GM12878 (cell line): ENCODE measurements at regions of chr16 and their contacts with region 1.

Region 1: DNA sequence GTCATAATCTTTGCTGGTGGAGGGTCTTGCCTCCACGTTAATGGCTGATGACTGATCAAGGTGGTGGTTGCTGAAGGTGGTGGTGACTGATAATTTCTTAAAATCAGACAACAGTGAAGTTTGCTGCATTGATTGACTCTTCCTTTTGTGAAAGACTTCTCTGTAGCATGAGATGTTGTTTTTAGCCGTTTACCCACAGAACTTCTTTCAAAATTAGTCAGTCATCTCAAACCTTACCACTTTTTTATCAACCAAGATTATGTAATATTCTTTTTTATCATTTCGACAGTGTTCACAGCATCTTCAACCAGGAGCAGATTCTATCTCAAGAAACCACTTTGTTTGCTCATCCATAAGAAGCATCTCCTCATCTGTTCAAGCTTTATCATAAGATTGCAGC is 5.9 kb downstream of the UQCRC2 start:
- DNase-seq: no peak
- ATAC-seq: peak; percentile 64
- H3K4me3 ChIP-seq: no peak overlapping the region
- H3K27ac ChIP-seq: peak overlapping the region; percentile 21; the same call in 1 of the 2 replicates
- H3K4me1 ChIP-seq: peaks cover 21% of the 10 kb centered on the region
- H3K27me3 ChIP-seq: no peaks in the 10 kb centered on the region
- CTCF ChIP-seq: no peak
- EP300 ChIP-seq: 0 out of 4 replicates have a peak, but pooled peaks of 1 of the 2 experiments have one; percentile 41
- POLR2A ChIP-seq: no peak
- RAD21 ChIP-seq: no peak

Region 2: DNA sequence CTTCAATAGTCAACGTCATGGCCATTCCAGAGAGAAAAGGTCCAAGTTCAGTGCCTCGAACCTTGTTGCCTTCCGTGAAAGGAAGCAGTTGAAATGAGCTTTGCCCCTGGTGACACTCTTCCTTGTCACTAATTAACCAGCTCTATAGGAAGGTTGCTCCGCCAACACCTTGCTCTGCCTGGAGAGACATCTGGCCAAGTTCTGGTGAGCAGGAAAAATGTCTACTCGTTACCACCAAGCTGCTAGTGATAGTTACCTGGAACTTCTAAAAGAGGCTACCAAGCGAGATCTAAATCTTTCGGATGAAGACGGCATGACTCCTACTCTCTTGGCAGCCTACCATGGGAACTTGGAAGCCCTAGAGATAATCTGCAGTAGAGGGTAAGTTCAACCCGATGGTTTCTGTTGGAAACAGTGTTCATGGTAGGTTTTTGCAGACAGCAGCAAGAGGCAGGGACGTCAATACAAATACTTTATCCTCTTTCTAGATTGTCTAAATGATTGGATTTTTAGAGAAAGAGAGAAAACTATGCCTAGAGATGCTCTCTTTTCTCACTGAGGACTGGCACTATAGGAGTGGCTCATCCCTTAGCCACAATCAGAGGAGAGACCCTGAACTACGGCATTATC is 725.4 kb before region 1 on chr16 and contains the start of gene ANKS4B:
- CTCF ChIA-PET with region 1: no interaction called
- POLR2A ChIA-PET with region 1: no interaction called
- RAD21 ChIA-PET with region 1: no interaction called
- SMC1A ChIA-PET with region 1: no interaction called
- in situ Hi-C with region 1: no loop called
- intact Hi-C with region 1: no loop called
- DNase-seq: no peak
- ATAC-seq: no peak
- H3K4me3 ChIP-seq: no peak within 1 kb of the TSS
- H3K27ac ChIP-seq: no peak within 1 kb of the TSS
- H3K4me1 ChIP-seq: no peaks in the 10 kb centered on the region
- H3K27me3 ChIP-seq: no peaks in the 10 kb centered on the region; a peak in 1 of 4 replicates
- CTCF ChIP-seq: no peak
- EP300 ChIP-seq: no peak
- POLR2A ChIP-seq: no peak
- RAD21 ChIP-seq: no peak
- polyA plus RNA-seq, gene ANKS4B: 0.02 to 0.11 TPM

Region 3: GRCh38 chr16:21946889-21947635 is 12.0 kb before region 1 on chr16:
- CTCF ChIA-PET with region 1: interaction called, 5 read pairs
- POLR2A ChIA-PET with region 1: interaction called, 14 read pairs
- RAD21 ChIA-PET with region 1: interaction called, 7 read pairs
- SMC1A ChIA-PET with region 1: interaction called, 16 read pairs
- in situ Hi-C with region 1: no loop called
- intact Hi-C with region 1: no loop called
- DNase-seq: no peak
- ATAC-seq: peak; percentile 79
- H3K4me3 ChIP-seq: no peak overlapping the region
- H3K27ac ChIP-seq: no peak overlapping the region
- H3K4me1 ChIP-seq: peaks cover 11% of the 10 kb centered on the region; the same call in 1 of the 2 replicates
- H3K27me3 ChIP-seq: no peaks in the 10 kb centered on the region
- CTCF ChIP-seq: no peak; a peak in 1 of 6 replicates
- EP300 ChIP-seq: no peak
- POLR2A ChIP-seq: no peak
- RAD21 ChIP-seq: no peak

Region 4: GRCh38 chr16:22325598-22326368 is 366.7 kb after region 1 on chr16:
- CTCF ChIA-PET with region 1: no interaction called
- POLR2A ChIA-PET with region 1: no interaction called
- RAD21 ChIA-PET with region 1: no interaction called
- SMC1A ChIA-PET with region 1: no interaction called
- in situ Hi-C with region 1: no loop called
- intact Hi-C with region 1: no loop called
- DNase-seq: no peak
- ATAC-seq: no peak
- H3K4me3 ChIP-seq: no peak overlapping the region
- H3K27ac ChIP-seq: no peak overlapping the region
- H3K4me1 ChIP-seq: no peaks in the 10 kb centered on the region
- H3K27me3 ChIP-seq: no peaks in the 10 kb centered on the region
- CTCF ChIP-seq: no peak
- EP300 ChIP-seq: no peak
- POLR2A ChIP-seq: no peak
- RAD21 ChIP-seq: no peak